AG04450 (cell line): ENCODE measurements at regions of chr14 and their contacts with region 1.

Region 1: DNA sequence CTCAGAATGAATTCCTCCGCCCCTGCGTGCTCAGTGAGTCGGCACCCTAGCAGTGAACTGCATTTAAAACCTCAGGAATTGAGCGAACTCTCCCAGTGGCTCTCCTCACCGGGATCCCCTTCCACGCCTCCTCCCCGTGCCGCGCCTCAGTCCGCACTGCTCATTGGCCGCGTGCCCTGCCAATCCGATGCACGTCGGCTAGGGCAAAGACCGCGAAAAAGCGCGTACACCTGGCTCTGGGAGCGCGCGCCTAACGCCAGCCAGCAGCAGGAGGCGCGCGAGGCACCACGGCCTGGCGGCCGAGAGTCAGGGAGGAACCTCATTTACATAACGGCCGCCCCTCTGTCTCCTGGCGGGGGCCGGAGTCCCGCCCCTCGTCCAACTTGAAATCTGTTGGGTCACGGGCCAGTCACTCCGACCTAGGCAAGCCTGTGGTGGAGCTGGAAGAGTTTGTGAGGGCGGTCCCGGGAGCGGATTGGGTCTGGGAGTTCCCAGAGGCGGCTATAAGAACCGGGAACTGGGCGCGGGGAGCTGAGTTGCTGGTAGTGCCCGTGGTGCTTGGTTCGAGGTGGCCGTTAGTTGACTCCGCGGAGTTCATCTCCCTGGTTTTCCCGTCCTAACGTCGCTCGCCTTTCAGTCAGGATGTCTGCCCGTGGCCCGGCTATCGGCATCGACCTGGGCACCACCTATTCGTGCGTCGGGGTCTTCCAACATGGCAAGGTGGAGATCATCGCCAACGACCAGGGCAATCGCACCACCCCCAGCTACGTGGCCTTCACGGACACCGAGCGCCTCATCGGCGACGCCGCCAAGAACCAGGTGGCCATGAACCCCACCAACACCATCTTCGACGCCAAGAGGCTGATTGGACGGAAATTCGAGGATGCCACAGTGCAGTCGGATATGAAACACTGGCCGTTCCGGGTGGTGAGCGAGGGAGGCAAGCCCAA is at the start of gene HSPA2:
- DNase-seq: peak; percentile 99
- H3K4me3 ChIP-seq: peak within 1 kb of the TSS; percentile 69
- H3K27ac ChIP-seq: peak within 1 kb of the TSS; percentile 89
- H3K27me3 ChIP-seq: peaks cover 10% of the 10 kb centered on the region
- CTCF ChIP-seq: peak; percentile 86
- polyA plus RNA-seq, gene HSPA2: 18.2 and 21.4 TPM in 2 replicates

Region 2: DNA sequence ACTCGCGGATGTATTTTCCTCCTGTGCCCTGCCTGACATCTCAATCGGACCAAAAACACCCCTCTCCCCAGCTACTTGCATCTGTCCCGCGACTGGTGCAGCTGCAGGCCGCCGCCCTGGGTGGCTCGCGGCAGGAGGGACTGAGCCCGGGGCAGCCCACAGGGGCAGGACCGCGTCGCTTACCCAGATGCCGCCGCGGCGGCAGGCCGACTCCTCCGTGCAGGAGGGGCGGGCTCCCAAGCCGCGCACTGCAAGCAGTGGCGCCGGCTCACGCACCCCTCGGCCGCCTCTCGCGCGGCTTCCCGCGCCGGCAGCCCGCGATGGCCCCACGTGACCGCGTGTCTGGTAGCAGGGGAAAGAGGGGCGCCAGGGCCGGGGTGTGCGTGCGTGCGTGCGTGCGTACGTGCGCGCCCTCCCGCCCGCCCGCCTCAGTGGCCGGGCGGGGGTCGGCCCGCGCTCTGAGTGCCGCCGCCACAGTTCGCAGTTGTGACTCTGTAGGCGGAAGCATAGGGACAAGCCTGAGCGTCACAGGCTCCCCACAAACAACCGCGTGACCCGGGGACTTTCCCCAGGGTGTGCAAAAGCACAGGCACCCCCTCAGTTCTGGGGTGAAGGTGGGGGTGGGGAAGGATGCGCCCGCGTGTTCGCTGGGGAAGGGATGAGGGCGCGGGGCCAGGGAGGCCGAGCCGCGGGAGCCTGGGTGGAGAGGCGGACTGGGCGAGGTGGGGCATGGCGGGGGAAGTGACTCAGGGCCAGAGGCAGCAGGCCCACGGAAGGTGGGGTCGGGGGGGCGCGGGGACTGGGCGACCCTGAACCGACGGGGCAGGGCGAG is 36.8 kb before region 1 on chr14 and contains the start of gene ZBTB25:
- CTCF ChIA-PET with region 1: interaction called, 3 read pairs
- POLR2A ChIA-PET with region 1: interaction called, 10 read pairs
- DNase-seq: peak; percentile 78
- H3K4me3 ChIP-seq: peak within 1 kb of the TSS; percentile 82
- H3K27ac ChIP-seq: peak within 1 kb of the TSS; percentile 99
- H3K27me3 ChIP-seq: no peaks in the 10 kb centered on the region
- CTCF ChIP-seq: no peak
- polyA plus RNA-seq, gene ZBTB25: 6.3 and 7.3 TPM in 2 replicates

Region 3: DNA sequence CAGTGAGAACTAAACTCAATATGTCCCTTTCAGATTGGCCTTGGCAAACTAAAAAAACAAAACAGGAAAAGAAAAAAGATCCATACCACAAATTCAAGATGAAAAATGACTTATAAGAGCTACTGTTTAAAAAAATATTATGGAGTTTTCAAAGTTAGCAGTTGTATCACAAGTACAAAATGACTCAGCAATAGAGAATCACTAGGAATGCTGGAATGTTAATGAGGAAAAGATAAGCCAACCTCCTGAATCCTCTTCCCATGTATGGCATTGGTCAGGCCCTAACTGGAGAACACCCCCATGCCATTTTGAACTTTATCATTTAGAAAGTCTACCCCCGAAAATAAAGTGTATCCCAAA is 71.5 kb after region 1 on chr14:
- CTCF ChIA-PET with region 1: interaction called, 5 read pairs
- POLR2A ChIA-PET with region 1: interaction called, 13 read pairs
- DNase-seq: peak; percentile 61
- H3K4me3 ChIP-seq: no peak overlapping the region
- H3K27ac ChIP-seq: peak overlapping the region; percentile 88
- H3K27me3 ChIP-seq: no peaks in the 10 kb centered on the region
- CTCF ChIP-seq: no peak

Region 4: GRCh38 chr14:64628940-64629408 is 88.5 kb after region 1 on chr14:
- CTCF ChIA-PET with region 1: interaction called, 17 read pairs
- POLR2A ChIA-PET with region 1: interaction called, 35 read pairs
- DNase-seq: peak; percentile 87
- H3K4me3 ChIP-seq: no peak overlapping the region
- H3K27ac ChIP-seq: peak overlapping the region; percentile 97
- H3K27me3 ChIP-seq: no peaks in the 10 kb centered on the region
- CTCF ChIP-seq: peak; percentile 17; the same call in 1 of the 2 replicates

Region 5: GRCh38 chr14:64636208-64636979 is 95.9 kb after region 1 on chr14:
- CTCF ChIA-PET with region 1: interaction called, 73 read pairs
- POLR2A ChIA-PET with region 1: interaction called, 22 read pairs
- DNase-seq: no peak
- H3K4me3 ChIP-seq: no peak overlapping the region
- H3K27ac ChIP-seq: peak overlapping the region; percentile 11
- H3K27me3 ChIP-seq: no peaks in the 10 kb centered on the region
- CTCF ChIP-seq: peak; percentile 84

Region 6: GRCh38 chr14:64645220-64645892 is 104.9 kb after region 1 on chr14:
- CTCF ChIA-PET with region 1: interaction called, 4 read pairs
- POLR2A ChIA-PET with region 1: interaction called, 10 read pairs
- DNase-seq: peak; percentile 89
- H3K4me3 ChIP-seq: peak overlapping the region; percentile 13; the same call in 1 of the 2 replicates
- H3K27ac ChIP-seq: peak overlapping the region; percentile 98
- H3K27me3 ChIP-seq: no peaks in the 10 kb centered on the region
- CTCF ChIP-seq: no peak

Region 7: DNA sequence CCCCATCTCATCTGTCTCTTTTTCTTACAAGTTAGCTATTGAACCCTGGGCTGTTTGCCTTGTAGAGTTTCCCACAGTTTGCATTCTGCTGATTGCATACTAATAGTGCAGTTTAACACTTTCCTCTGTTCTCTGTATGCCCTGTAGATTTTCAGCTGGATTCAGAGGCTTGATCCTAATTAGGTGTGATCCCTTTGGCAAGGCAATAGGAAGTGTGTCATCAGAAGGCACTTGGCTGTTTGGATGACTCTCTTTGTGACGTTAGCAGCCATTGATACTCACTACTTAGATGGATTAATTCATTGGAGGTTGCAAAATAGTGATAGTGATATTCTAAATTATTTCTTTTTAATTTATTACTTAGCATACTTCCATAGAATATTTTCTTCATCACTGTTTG is 905.7 kb after region 1 on chr14:
- CTCF ChIA-PET with region 1: no interaction called
- POLR2A ChIA-PET with region 1: no interaction called
- DNase-seq: no peak
- H3K4me3 ChIP-seq: no peak overlapping the region
- H3K27ac ChIP-seq: no peak overlapping the region
- H3K27me3 ChIP-seq: no peaks in the 10 kb centered on the region
- CTCF ChIP-seq: no peak